AG04450 (cell line): ENCODE measurements at regions of chr19 and their contacts with region 1.

Region 1: GRCh38 chr19:33186431-33187182 is 7.5 kb upstream of the LRP3 start:
- DNase-seq: no peak
- H3K4me3 ChIP-seq: no peak overlapping the region
- H3K27ac ChIP-seq: no peak overlapping the region
- H3K27me3 ChIP-seq: peaks cover 12% of the 10 kb centered on the region
- CTCF ChIP-seq: no peak

Region 2: DNA sequence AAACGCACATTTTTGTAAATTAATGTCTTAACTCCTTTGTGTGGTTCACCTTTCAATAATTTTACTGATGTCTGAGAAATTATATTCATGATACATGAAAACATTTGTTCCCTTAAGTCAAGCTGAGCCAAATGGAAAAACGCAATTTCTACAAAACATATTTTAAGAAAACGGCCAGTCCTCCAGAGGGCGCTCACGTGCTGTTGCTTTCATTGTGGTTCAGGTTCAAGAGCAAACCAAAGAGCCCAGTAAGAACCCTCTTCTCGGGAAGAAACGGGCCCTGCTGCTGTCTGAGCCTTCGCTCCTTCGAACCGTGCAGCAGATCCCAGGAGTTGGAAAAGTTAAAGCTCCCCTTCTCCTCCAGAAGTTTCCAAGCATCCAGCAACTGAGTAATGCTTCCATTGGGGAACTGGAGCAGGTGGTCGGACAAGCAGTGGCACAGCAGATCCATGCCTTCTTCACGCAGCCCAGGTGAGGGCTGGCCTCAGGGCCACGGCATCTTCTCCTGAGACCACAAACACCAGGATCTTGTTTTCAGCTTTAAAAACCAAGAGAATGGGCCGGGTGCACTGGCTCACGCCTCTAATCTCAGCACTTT is 210.3 kb before region 1 on chr19:
- CTCF ChIA-PET with region 1: interaction called, 20 read pairs
- POLR2A ChIA-PET with region 1: no interaction called
- DNase-seq: no peak
- H3K4me3 ChIP-seq: no peak overlapping the region
- H3K27ac ChIP-seq: no peak overlapping the region
- H3K27me3 ChIP-seq: no peaks in the 10 kb centered on the region
- CTCF ChIP-seq: peak; percentile 90

Region 3: DNA sequence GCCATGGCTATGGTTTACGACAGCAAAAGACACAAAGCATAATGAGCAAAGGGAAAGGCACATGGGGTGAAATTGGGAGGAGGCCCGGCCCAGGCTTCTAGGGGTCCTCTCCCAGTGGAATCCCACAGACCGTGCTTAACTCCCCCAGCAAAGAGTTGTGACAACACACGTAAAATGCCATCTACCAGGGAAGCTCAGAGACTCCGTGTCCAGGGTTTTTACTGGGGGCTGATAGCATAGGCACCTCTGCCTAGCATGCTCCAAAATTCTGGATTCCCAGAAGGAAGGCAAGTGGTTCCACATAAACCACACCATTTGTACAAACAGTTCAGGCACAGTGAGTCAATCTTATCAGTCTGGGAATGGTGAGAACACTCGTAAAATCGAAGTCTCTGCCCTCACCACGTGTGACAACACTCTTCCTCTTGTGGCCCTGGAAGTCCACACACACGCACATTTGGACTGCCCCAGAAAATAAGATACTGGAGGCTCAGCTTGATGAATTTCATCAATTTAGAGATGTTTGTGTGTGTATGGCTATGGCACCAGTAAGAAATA is 156.8 kb before region 1 on chr19:
- CTCF ChIA-PET with region 1: no interaction called
- POLR2A ChIA-PET with region 1: no interaction called
- DNase-seq: no peak
- H3K4me3 ChIP-seq: no peak overlapping the region
- H3K27ac ChIP-seq: no peak overlapping the region
- H3K27me3 ChIP-seq: no peaks in the 10 kb centered on the region
- CTCF ChIP-seq: no peak

Region 4: DNA sequence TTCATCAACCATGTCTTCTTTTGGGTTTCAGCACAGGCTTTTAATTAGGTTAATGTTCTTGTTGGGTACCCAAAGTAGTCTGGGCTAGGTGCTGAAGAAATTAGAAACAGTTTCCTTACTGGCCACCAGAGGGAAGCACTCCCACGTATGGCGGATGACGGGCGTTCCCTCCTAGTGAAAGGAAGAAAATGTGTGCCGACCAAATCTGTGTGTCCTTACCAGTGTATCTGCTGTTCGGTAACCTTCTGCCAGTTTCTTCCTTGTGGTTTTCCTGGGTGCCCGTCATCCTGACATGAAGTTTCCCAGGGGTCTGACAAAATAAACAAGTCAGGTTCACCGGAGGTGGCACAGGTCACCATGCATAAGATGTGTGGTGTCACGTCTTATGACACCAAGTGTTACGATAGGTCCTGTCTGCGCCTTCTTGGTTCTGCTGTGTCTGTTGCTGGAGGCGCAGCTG is 60.6 kb before region 1 on chr19:
- CTCF ChIA-PET with region 1: interaction called, 98 read pairs
- POLR2A ChIA-PET with region 1: no interaction called
- DNase-seq: peak; percentile 42
- H3K4me3 ChIP-seq: no peak overlapping the region
- H3K27ac ChIP-seq: no peak overlapping the region
- H3K27me3 ChIP-seq: no peaks in the 10 kb centered on the region
- CTCF ChIP-seq: peak; percentile 90

Region 5: DNA sequence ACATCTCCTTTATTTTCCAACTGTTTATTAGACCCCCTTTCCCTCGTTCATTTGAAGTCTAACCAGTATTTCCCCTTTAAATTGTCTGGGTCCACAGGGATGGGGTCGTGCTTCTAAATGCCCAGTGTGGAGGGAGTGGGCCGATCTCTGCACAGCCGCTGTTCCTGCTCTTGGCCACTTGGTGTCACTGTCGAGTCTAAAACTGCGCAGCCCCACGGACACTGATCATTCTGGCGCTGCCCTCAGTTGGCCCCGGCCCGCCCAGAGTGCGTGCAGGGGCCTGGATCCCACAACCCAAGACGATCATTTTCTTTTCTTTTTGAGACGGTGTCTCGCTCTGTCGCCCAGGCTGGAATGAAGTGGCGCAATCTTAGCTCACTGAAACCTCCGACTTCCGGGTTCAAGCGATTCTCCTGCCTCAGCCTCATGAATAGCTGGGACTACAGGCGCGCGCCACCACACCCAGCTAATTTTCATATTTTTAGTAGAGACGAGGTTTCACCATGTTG is 42.7 kb before region 1 on chr19:
- CTCF ChIA-PET with region 1: interaction called, 74 read pairs
- POLR2A ChIA-PET with region 1: no interaction called
- DNase-seq: peak; percentile 6
- H3K4me3 ChIP-seq: no peak overlapping the region
- H3K27ac ChIP-seq: no peak overlapping the region
- H3K27me3 ChIP-seq: peaks cover 7% of the 10 kb centered on the region
- CTCF ChIP-seq: peak; percentile 96

Region 6: DNA sequence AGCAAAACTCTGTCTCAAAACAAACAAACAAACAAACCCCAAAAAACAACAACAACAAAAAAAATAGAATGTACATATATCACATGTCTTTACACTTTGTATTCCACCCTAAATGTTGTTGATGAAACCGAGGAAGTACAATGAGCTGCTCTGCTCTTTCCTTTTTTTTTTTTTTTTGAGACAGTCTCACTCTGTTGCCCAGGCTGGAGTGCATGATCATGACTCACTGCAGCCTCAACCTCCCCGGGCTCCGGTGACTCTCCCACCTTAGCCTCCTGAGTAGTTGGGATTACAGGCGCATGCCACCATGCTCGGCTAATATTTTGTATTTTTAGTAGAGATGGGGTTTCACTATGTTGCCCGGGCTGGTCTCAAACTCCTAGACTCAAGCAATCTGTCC is 23.1 kb before region 1 on chr19:
- CTCF ChIA-PET with region 1: interaction called, 23 read pairs
- POLR2A ChIA-PET with region 1: no interaction called
- DNase-seq: no peak
- H3K4me3 ChIP-seq: no peak overlapping the region
- H3K27ac ChIP-seq: no peak overlapping the region
- H3K27me3 ChIP-seq: no peaks in the 10 kb centered on the region
- CTCF ChIP-seq: no peak

Region 7: DNA sequence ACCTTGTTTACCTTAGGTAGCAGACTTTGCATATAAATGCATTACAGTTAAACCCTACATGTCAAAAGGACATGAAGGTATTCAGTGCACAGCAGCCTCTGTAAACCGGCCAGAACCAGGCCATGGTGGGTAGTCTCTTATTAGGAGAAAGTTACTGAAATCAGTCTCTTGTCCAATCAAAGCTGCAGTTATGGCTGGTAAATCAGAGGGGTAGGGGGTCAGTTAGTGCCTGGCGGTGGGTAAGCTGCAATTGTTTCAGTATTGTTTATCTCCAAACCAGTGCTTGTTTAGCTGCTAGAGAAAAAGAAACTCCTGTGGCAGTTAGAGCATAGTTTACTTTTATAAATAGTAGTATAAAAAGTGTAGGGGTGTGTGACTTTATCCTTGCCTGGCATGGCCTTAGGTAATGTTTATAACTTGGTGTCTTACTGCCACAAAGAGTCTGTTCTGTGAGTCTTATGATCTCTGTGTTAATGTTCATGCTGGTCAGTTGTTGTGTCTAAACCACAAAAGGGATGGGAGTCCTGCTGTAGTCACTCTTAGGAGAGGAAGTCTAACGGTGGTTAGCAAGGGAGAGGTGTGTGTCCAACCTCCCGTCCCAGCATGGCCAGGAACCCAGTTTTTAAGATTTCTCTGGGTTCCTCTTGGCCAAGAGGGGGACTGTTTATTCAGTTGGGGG is 463.2 kb after region 1 on chr19:
- CTCF ChIA-PET with region 1: interaction called, 10 read pairs
- POLR2A ChIA-PET with region 1: no interaction called
- DNase-seq: no peak
- H3K4me3 ChIP-seq: no peak overlapping the region
- H3K27ac ChIP-seq: no peak overlapping the region
- H3K27me3 ChIP-seq: peaks cover 3% of the 10 kb centered on the region
- CTCF ChIP-seq: no peak